Right cardiac atrium (tissue), 5 donors: ENCODE measurements at regions of chr3 and their contacts with region 1.

Region 1: DNA sequence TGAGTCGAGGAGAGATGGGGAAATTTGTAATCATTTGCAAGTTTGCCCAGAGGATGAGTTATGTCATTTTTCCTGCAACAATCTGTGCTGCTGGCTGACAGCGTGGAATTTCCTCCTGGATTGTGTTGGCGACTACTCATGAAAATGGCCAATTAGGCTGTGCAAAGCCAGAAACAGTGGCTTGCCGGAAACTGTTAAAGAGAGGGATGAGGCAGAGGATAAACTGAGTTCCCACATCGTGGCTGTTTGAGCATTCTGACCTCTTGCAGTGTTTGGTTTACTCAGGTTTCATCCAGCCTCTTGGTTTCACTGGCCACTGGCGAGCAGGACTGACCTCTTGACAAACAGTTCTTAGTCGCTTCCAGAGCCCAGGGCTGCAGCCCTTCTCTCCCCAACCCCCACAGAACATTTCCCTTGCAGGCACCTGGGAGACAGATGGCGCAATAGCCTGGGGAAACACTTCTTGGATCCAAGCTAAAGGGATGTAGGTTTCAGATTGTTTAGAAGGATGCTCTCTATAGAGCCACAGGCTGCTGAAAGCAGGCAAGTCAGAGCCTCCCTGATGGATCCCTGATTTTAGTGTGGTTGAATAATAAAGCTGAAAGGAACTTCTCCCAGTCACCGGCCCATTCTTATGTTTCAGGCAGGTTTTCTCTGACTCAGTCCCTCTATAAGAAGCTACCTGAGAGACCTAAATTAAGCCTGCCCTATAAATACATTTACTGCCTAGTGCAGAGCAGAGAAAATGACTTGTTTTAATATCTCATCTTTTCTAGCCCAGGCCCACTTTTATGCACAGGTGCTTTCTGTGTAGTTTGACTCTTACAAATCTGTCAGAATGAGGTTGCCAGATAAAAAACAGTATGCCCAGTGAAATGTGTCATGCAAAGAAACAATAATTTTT is 92.8 kb upstream of the UBE2E1 start:
- DNase-seq: peak in 2 of 3 donors; percentile 44 to 62
- ATAC-seq: peak; percentile 80 to 86
- H3K4me3 ChIP-seq: no peak overlapping the region
- H3K27ac ChIP-seq: no peak overlapping the region
- H3K4me1 ChIP-seq: no peaks in the 10 kb centered on the region
- H3K27me3 ChIP-seq: no peaks in the 10 kb centered on the region

Region 2: GRCh38 chr3:23776352-23776891 is 63.5 kb after region 1 on chr3:
- intact Hi-C with region 1: loop called in 1 of 4 experiments (anchors 10 kb)
- DNase-seq: peak in 1 of 3 donors; percentile 16
- ATAC-seq: peak; percentile 59 to 79
- H3K4me3 ChIP-seq: no peak overlapping the region
- H3K27ac ChIP-seq: peak overlapping the region; percentile 17
- H3K4me1 ChIP-seq: peaks cover 7% of the 10 kb centered on the region
- H3K27me3 ChIP-seq: no peaks in the 10 kb centered on the region